ENCODE measurements at regions of chr19 and their contacts with region 1.

Region 1: DNA sequence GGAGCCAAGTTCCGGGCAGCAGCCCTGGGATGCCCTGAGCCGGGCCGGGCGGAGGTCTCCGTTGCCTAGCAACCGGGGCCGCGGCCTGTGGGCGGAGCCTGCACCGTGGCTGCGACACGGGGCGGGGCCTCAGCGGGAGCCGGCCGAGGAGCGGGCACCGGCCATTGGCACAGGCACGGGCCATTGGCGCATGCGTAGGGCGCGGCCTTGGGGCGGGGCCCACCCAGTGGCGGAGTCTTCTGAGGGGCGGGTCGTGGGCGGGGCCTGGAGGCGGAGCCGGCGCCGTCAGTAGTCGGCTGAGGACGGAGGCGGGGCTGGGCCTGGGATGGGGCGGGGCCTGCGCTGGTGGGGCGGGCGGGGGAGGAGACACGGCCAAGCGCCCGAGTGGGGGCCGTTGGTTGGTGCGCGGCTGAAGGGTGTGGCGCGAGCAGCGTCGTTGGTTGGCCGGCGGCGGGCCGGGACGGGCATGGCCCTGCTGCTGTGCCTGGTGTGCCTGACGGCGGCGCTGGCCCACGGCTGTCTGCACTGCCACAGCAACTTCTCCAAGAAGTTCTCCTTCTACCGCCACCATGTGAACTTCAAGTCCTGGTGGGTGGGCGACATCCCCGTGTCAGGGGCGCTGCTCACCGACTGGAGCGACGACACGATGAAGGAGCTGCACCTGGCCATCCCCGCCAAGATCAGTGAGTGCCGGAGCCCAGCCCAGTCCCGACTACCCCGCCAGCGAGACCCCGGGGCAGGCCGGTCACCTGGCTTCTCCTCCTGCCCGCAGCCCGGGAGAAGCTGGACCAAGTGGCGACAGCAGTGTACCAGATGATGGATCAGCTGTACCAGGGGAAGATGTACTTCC is at the start of gene IZUMO4:
- DNase-seq: peak; percentile 99
- H3K4me3 Mint-ChIP-seq: peak within 1 kb of the TSS; percentile 97
- H3K27ac Mint-ChIP-seq: peak within 1 kb of the TSS; percentile 91
- H3K4me1 Mint-ChIP-seq: peaks cover 23% of the 10 kb centered on the region
- H3K27me3 Mint-ChIP-seq: no peaks in the 10 kb centered on the region
- total RNA-seq, gene IZUMO4: 6.7 and 7.1 TPM in 2 replicates

Region 2: DNA sequence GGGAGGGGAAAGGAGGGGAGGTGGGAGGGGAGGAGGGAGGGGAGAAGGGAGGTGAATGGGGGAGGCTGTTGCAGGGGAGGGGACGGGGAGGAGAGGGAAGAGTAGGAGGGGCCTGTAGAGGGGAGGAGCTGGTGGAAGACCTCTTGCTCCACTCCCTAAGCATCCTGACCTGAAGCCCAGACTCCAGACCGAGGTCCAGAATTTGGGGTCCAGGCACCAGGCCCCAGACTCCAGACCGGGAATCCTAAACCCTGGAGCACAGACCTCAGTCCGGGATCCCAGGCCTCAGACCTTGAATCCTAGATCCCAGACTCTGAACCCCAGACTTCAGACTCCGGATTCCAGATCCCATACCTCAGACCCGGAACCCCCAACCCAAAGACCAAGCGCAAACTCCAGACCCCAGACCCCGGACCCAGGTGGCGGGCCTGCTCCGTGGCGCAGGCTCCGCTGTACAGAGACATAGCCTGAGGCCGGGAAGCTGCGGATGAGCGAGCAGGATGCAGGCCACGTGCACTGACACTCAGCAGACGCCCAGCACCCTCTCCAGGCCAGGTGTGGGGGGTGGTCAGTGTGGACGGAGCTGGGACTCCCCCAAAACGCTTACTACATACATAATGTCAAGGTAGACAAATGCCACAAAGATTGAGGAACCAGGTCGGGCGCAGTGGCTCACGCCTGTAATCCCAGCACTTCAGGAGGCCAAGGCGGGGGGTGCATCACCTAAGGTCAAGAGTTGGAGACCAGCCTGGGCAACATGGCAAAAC is 80.5 kb before region 1 on chr19:
- intact Hi-C with region 1: loop called (anchors 1 kb)
- DNase-seq: peak; percentile 44
- H3K4me3 Mint-ChIP-seq: peak overlapping the region; percentile 77
- H3K27ac Mint-ChIP-seq: peak overlapping the region; percentile 36
- H3K4me1 Mint-ChIP-seq: peaks cover 9% of the 10 kb centered on the region
- H3K27me3 Mint-ChIP-seq: no peaks in the 10 kb centered on the region

Region 3: DNA sequence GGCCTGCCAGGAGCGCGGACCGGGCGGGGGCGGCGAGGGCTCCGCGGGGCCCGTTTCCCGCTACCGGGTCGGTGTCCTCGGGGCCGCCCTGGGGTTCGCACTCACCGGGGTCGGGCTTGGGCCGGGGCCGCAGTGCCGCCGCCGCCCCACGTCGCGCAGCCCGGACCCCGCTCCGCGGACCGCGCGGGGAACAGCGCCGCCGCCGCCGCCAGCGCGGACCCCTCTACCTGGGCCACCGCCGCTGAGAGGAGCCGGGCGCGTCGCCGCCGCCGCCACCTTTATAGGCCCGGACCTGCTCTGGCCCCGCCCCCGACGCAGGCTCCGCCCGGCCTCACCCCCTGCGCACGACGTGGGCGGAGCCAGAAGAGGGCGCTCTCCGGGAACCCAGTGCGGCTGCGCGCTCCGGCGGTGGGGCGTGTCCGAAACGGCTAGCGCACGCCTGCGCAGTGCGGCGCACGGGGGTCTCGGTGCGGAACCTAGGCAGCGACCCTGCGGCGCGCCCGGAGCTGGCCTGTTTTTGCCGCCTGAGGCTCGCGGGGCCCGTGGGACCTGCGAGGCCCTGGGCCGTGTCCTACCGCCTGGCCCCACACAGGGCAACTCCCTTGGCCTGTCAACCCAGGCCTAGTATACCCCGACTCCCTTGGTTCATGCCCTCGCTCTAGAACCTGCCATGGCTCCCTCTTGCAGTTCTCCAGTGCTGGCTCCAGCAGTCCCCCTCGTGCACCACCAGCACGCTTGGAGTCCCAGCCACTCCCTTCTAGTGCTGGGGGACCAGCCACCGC is 45.5 kb before region 1 on chr19 and contains the start of gene MKNK2:
- intact Hi-C with region 1: loop called (anchors 1 kb)
- DNase-seq: peak; percentile 92
- H3K4me3 Mint-ChIP-seq: peak within 1 kb of the TSS; percentile 87
- H3K27ac Mint-ChIP-seq: peak within 1 kb of the TSS; percentile 87
- H3K4me1 Mint-ChIP-seq: peaks cover 27% of the 10 kb centered on the region
- H3K27me3 Mint-ChIP-seq: no peaks in the 10 kb centered on the region
- total RNA-seq, gene MKNK2: 150 and 166 TPM in 2 replicates

Region 4: DNA sequence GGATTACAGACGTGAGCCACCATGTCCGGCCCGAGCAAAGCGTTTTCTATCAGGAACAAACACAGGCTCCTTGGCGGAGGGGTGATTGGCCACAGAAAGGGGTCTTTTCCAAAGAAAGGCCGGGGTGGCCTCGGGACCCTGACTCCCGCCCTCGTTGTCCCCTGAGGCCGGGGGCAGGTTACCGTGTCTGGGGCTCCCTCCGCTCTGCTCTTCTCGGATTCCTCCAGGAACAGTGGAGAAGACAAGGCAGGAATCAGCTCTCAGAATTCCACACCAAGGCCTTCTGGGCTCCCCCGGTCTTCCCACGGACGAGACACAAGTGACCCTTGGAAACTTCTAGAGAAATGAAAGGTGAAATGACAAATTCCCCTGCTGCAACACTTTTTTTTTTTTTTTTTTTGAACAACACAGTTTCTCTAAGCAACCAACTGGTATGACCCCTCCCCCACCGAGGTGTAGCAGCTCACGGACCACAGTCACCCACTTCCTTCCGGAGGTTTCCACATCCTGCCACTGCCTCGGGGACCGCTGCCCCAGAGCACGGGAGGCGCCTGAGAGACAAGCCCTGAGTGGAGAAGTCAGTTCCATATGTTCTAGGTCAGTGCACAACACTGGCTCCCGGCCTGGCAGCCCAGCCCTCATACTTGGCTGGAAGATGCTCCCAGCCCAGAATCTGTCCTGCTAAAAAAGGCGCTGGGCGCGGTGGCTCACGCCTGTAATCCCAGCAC is 11.5 kb before region 1 on chr19:
- intact Hi-C with region 1: loop called (anchors 1 kb)
- DNase-seq: peak; percentile 96
- H3K4me3 Mint-ChIP-seq: peak overlapping the region; percentile 94
- H3K27ac Mint-ChIP-seq: peak overlapping the region; percentile 96
- H3K4me1 Mint-ChIP-seq: peaks cover 69% of the 10 kb centered on the region
- H3K27me3 Mint-ChIP-seq: peaks cover 2% of the 10 kb centered on the region

Region 5: GRCh38 chr19:2269244-2269947 is 172.7 kb after region 1 on chr19:
- intact Hi-C with region 1: loop called (anchors 5 kb)
- DNase-seq: peak; percentile 99
- H3K4me3 Mint-ChIP-seq: peak overlapping the region; percentile 91
- H3K27ac Mint-ChIP-seq: peak overlapping the region; percentile 88
- H3K4me1 Mint-ChIP-seq: peaks cover 23% of the 10 kb centered on the region
- H3K27me3 Mint-ChIP-seq: peaks cover 5% of the 10 kb centered on the region

Measured in activated T-helper 1 cell treated with anti-CD3 and anti-CD28 coated beads, Interleukin-12 subunit alpha, Interleukin-12 subunit beta, Interleukin-2, Interleukin-4 antibody, amounts not matched to agents 30 ng/mL and 10 ng/mL and 1 ng/mL, durations not matched to agents 14 hours and 24 hours and 36 hours (primary cell).